ENCODE measurements at regions of chr2 and their contacts with region 1.

Region 1: DNA sequence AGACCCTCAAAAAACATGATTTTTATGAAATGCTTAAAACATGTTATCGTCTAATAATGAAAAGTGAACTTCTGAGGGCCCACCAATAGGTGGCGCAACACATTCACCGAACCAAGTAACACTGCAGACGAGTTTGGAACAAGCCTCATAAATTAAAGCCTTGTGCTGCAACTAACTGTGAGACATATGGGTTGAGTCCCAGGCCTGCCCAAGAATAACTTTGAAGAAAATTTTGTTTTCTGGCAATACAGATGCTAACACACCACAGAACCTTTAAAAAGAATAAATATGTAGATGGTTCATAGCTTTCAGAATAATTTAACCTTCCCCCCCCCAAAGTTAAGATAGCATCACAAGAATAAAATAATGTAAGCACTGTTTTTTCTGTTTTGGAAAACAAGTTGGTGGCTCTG is 285.8 kb downstream of the RNF144A start:
- DNase-seq: peak; percentile 77
- H3K4me3 Mint-ChIP-seq: no peak overlapping the region
- H3K27ac Mint-ChIP-seq: no peak overlapping the region
- H3K4me1 Mint-ChIP-seq: no peaks in the 10 kb centered on the region
- H3K27me3 Mint-ChIP-seq: no peaks in the 10 kb centered on the region

Region 2: DNA sequence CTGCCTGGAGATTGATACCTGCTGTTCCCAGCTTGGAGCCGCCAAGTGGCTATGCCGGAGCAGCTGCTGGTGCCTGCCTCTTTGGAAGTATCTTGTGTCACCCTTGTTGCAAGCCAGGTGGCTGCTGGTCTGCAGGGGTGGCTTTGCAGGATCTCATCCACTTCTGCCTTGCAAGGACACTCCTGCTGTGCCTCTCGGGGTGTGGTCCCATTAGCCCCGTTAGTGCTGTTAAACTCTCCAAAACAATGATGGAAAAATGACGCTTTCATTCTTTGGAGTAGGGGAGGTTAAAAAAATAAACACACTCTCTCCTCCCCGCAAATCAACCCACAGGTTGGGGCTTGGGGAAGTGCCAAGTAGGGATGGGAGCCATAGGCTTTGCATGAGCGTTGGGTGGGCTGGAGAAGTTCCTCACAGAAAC is 67.0 kb after region 1 on chr2:
- CTCF ChIA-PET with region 1: no interaction called
- intact Hi-C with region 1: no loop called
- DNase-seq: no peak
- H3K4me3 Mint-ChIP-seq: no peak overlapping the region
- H3K27ac Mint-ChIP-seq: no peak overlapping the region
- H3K4me1 Mint-ChIP-seq: no peaks in the 10 kb centered on the region
- H3K27me3 Mint-ChIP-seq: no peaks in the 10 kb centered on the region

Region 3: DNA sequence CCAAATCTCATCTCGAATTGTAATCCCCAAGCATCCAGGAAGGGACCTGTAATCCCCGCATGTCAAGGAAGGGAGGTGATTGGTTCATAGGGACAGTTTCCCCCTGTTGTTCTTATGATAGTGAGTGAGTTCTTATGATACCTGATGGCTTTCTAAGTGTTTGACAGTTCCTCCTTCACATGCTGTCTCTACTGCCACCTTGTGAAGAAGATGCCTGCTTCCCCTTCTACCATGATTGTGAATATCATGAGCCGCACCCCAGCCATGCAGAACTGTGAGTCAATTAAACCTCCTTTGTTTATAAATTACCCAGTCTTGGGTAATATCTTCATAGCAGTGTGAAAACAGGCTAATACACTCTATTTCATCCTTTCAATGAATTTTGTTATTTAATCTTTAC is 160.8 kb after region 1 on chr2:
- CTCF ChIA-PET with region 1: no interaction called
- intact Hi-C with region 1: loop called (anchors 5 kb)
- DNase-seq: no peak
- H3K4me3 Mint-ChIP-seq: no peak overlapping the region
- H3K27ac Mint-ChIP-seq: no peak overlapping the region
- H3K4me1 Mint-ChIP-seq: no peaks in the 10 kb centered on the region
- H3K27me3 Mint-ChIP-seq: no peaks in the 10 kb centered on the region

Region 4: DNA sequence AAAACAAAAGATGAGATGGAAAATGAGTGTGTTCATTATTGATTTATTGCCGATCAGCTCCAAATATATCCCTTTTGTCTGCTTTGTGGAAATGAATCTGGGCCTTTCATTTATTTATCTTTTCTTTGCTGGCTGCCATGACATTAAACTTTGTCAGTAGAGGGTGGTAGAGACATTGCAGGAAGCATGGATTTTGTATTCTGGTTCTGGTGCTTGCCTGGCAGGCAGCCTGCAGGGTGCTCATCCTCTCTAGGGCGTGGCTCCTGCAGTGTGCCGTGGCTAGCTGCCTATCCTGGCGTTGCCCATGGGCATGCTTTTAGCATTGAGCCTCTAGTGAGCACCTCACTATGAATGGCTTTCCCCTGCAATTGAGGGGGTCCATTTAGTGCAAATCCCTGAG is 307.3 kb after region 1 on chr2:
- CTCF ChIA-PET with region 1: no interaction called
- intact Hi-C with region 1: no loop called
- DNase-seq: no peak
- H3K4me3 Mint-ChIP-seq: no peak overlapping the region
- H3K27ac Mint-ChIP-seq: no peak overlapping the region
- H3K4me1 Mint-ChIP-seq: peaks cover 14% of the 10 kb centered on the region
- H3K27me3 Mint-ChIP-seq: no peaks in the 10 kb centered on the region

Region 5: GRCh38 chr2:7649461-7650228 is 446.6 kb after region 1 on chr2:
- CTCF ChIA-PET with region 1: no interaction called
- intact Hi-C with region 1: no loop called
- DNase-seq: peak; percentile 24
- H3K4me3 Mint-ChIP-seq: no peak overlapping the region
- H3K27ac Mint-ChIP-seq: no peak overlapping the region
- H3K4me1 Mint-ChIP-seq: peaks cover 23% of the 10 kb centered on the region
- H3K27me3 Mint-ChIP-seq: no peaks in the 10 kb centered on the region

Measured in activated naive CD4-positive, alpha-beta T cell treated with anti-CD3 and anti-CD28 coated beads for 36 hours (primary cell).